Gastrocnemius medialis (tissue), 4 donors: ENCODE measurements at regions of chr19 and their contacts with region 1.

Region 1: GRCh38 chr19:10602330-10603083 is 15.4 kb upstream of the AP1M2 start:
- DNase-seq: peak; percentile 67 to 83
- ATAC-seq: peak; percentile 94 to 95
- H3K4me3 ChIP-seq: peak overlapping the region; percentile 93 to 100 (median 98)
- H3K27ac ChIP-seq: peak overlapping the region; percentile 86 to 98 (median 94)
- H3K4me1 ChIP-seq: peaks cover 15 to 18% of the 10 kb centered on the region in 2 donors
- H3K27me3 ChIP-seq: no peaks in the 10 kb centered on the region
- CTCF ChIP-seq: no peak
- POLR2A ChIP-seq: peak; percentile 60 to 62

Region 2: GRCh38 chr19:10625003-10625776 is 22.7 kb after region 1 on chr19 and contains the start of gene SLC44A2:
- in situ Hi-C with region 1: no loop called
- intact Hi-C with region 1: loop called (anchors 2 kb)
- DNase-seq: peak; percentile 82 to 92
- ATAC-seq: peak; percentile 80 to 85
- H3K4me3 ChIP-seq: peak within 1 kb of the TSS; percentile 65 to 80 (median 76)
- H3K27ac ChIP-seq: peak within 1 kb of the TSS; percentile 93 to 95 (median 95)
- H3K4me1 ChIP-seq: peaks cover 32 to 35% of the 10 kb centered on the region in 2 donors
- H3K27me3 ChIP-seq: no peaks in the 10 kb centered on the region
- CTCF ChIP-seq: no peak
- POLR2A ChIP-seq: peak; percentile 82 to 92
- total RNA-seq, gene SLC44A2: 51.1 to 168 (median 105) TPM

Region 3: DNA sequence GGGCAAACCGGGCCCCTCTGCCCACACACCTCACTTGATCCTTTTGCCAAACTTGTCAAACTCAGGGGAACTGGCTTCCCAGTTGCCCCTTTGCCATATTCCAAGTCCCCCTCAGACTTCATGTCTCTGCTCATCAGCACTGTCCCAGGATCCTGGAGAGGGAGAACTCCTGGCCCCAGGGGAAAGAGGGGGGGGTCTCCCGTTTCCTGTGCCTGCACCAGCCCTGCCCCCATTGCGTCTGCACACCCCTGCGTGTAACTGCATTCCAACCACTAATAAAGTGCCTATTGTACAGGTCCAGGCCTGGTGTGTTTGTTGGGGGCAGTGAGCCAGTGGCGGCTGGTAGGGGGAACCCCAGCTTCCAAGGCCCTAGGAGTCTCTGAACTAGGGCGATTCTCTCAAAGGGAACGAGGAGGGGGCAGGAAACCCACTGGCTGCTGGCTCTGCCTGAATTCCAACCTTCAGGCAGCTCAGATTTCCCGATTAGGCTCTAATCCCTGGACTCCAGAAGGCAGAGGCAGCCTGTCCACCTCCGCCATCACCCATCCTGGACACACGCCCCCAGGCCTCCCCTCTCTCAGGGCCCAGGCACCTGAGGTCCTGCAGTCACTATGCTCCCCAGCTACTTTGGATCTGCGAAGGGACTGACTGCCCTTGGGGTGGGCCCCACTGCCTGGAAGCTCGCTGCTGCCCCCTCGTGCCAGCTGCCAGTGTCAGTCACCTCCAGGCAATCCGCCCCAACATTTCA is 41.9 kb after region 1 on chr19:
- in situ Hi-C with region 1: no loop called
- intact Hi-C with region 1: loop called (anchors 5 kb)
- DNase-seq: peak; percentile 73 to 80
- ATAC-seq: peak; percentile 87 to 94
- H3K4me3 ChIP-seq: no peak overlapping the region
- H3K27ac ChIP-seq: peak overlapping the region; percentile 26 to 50 (median 36)
- H3K4me1 ChIP-seq: peaks cover 17 to 18% of the 10 kb centered on the region in 2 donors
- H3K27me3 ChIP-seq: no peaks in the 10 kb centered on the region
- CTCF ChIP-seq: peak; percentile 86 to 94 (median 93)
- POLR2A ChIP-seq: no peak

Region 4: DNA sequence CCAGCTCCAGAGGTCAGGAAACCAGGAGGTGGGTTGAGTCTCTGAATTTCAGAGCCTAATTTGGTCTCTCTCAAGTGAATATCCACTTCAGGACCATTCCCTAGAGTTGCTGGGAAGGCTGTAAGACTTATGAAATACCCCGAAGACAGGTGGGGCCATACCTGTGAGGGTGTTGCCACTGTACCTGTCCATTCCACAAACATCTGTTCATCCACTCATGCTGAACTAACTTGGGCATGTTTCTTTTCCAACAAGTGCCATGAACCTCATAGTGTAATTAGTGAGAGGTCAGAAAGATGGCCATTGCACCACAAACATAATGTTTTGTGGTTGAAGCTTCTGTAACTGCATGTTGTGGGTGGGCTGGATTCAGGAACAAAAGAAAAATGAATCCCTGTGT is 59.4 kb after region 1 on chr19:
- in situ Hi-C with region 1: no loop called
- intact Hi-C with region 1: no loop called
- DNase-seq: no peak
- ATAC-seq: no peak
- H3K4me3 ChIP-seq: no peak overlapping the region
- H3K27ac ChIP-seq: no peak overlapping the region
- H3K4me1 ChIP-seq: peaks cover 20 to 32% of the 10 kb centered on the region in 2 donors
- H3K27me3 ChIP-seq: no peaks in the 10 kb centered on the region
- CTCF ChIP-seq: no peak
- POLR2A ChIP-seq: no peak